ENCODE measurements at regions of chr5 and their contacts with region 1.

Region 1: GRCh38 chr5:154767576-154767975 is 12.4 kb downstream of the LARP1 start:
- DNase-seq: no peak
- ATAC-seq: no peak
- H3K4me3 ChIP-seq: no peak overlapping the region
- H3K27ac ChIP-seq: peak overlapping the region in 1 of 10 donors; percentile 0
- H3K4me1 ChIP-seq: peaks cover 29 to 92% (median 82%) of the 10 kb centered on the region in 9 donors
- H3K27me3 ChIP-seq: no peaks in the 10 kb centered on the region
- CTCF ChIP-seq: no peak

Region 2: GRCh38 chr5:154801083-154801482 is 33.5 kb after region 1 on chr5:
- intact Hi-C with region 1: loop called in 1 of 10 experiments (anchors 5 kb)
- DNase-seq: no peak
- ATAC-seq: no peak
- H3K4me3 ChIP-seq: no peak overlapping the region
- H3K27ac ChIP-seq: peak overlapping the region in 1 of 10 donors; percentile 11
- H3K4me1 ChIP-seq: peaks cover 0 to 27% (median 0%) of the 10 kb centered on the region in 9 donors
- H3K27me3 ChIP-seq: no peaks in the 10 kb centered on the region
- CTCF ChIP-seq: no peak

Region 3: GRCh38 chr5:154811653-154812365 is 44.2 kb after region 1 on chr5:
- intact Hi-C with region 1: no loop called
- DNase-seq: peak; percentile 36 to 60
- ATAC-seq: peak; percentile 33 to 74 (median 62)
- H3K4me3 ChIP-seq: no peak overlapping the region
- H3K27ac ChIP-seq: peak overlapping the region in 1 of 10 donors; percentile 9
- H3K4me1 ChIP-seq: peaks cover 0 to 17% (median 4%) of the 10 kb centered on the region in 9 donors
- H3K27me3 ChIP-seq: no peaks in the 10 kb centered on the region
- CTCF ChIP-seq: peak; percentile 81 to 92 (median 90)

Measured in heart right ventricle (tissue), 16 donors.